Naive thymus-derived CD4-positive, alpha-beta T cell (primary cell): ENCODE measurements at regions of chr22 and their contacts with region 1.

Region 1: GRCh38 chr22:39927544-39927943 is 26.7 kb downstream of the GRAP2 start:
- DNase-seq: no peak
- ATAC-seq: no peak
- H3K4me3 ChIP-seq: peak overlapping the region; percentile 68
- H3K4me3 Mint-ChIP-seq: no peak overlapping the region
- H3K27ac ChIP-seq: peak overlapping the region; percentile 78
- H3K27ac Mint-ChIP-seq: no peak overlapping the region
- H3K4me1 ChIP-seq: peaks cover 90 to 94% of the 10 kb centered on the region in 2 donors
- H3K4me1 Mint-ChIP-seq: peaks cover 34 to 48% (median 41%) of the 10 kb centered on the region in 7 donors
- H3K27me3 ChIP-seq: no peaks in the 10 kb centered on the region
- H3K27me3 Mint-ChIP-seq: no peaks in the 10 kb centered on the region

Region 2: GRCh38 chr22:39908737-39909136 is 18.8 kb before region 1 on chr22:
- CTCF ChIA-PET with region 1: interaction called, 17 read pairs
- POLR2A ChIA-PET with region 1: interaction called, 350 read pairs
- intact Hi-C with region 1: loop called (anchors 1 to 2 kb)
- DNase-seq: peak in 1 of 9 donors; percentile 50
- ATAC-seq: peak; percentile 45
- H3K4me3 ChIP-seq: peak overlapping the region; percentile 67
- H3K4me3 Mint-ChIP-seq: peak overlapping the region in 9 of 10 donors; percentile 93 to 99 (median 97)
- H3K27ac ChIP-seq: peak overlapping the region; percentile 83
- H3K27ac Mint-ChIP-seq: peak overlapping the region in 6 of 9 donors; percentile 86 to 98 (median 92)
- H3K4me1 ChIP-seq: peaks cover 53 to 65% of the 10 kb centered on the region in 2 donors
- H3K4me1 Mint-ChIP-seq: peaks cover 62 to 88% (median 76%) of the 10 kb centered on the region in 7 donors
- H3K27me3 ChIP-seq: no peaks in the 10 kb centered on the region
- H3K27me3 Mint-ChIP-seq: no peaks in the 10 kb centered on the region

Region 3: DNA sequence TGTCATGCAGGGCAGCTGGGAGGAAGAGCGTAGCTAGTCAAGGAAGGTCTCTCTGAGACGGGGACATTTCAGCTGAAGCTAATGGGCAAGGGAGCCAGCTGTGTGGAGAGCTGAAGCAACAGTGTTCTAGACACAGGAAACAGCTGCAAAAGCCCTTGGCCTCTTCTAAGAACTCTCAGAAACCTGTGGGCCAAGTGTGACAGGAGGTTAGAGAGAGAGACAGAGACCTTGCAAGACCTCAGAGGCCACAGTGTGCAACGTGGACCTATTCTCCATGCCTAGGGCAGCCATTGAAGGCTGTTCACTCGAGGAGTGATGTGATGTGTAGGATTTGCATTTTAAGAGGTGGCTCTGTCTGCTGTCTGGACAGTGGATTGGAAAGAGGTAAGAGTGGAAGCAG is 201.4 kb after region 1 on chr22:
- CTCF ChIA-PET with region 1: no interaction called
- POLR2A ChIA-PET with region 1: no interaction called
- intact Hi-C with region 1: no loop called
- DNase-seq: peak in 1 of 9 donors; percentile 24
- ATAC-seq: peak; percentile 83
- H3K4me3 ChIP-seq: no peak overlapping the region
- H3K4me3 Mint-ChIP-seq: peak overlapping the region in 7 of 10 donors; percentile 1 to 81 (median 34)
- H3K27ac ChIP-seq: no peak overlapping the region
- H3K27ac Mint-ChIP-seq: peak overlapping the region in 6 of 9 donors; percentile 32 to 85 (median 54)
- H3K4me1 ChIP-seq: no peaks in the 10 kb centered on the region
- H3K4me1 Mint-ChIP-seq: peaks cover 23 to 55% (median 44%) of the 10 kb centered on the region in 7 donors
- H3K27me3 ChIP-seq: no peaks in the 10 kb centered on the region
- H3K27me3 Mint-ChIP-seq: no peaks in the 10 kb centered on the region